ENCODE measurements at regions of chr1 and their contacts with region 1.

Region 1: DNA sequence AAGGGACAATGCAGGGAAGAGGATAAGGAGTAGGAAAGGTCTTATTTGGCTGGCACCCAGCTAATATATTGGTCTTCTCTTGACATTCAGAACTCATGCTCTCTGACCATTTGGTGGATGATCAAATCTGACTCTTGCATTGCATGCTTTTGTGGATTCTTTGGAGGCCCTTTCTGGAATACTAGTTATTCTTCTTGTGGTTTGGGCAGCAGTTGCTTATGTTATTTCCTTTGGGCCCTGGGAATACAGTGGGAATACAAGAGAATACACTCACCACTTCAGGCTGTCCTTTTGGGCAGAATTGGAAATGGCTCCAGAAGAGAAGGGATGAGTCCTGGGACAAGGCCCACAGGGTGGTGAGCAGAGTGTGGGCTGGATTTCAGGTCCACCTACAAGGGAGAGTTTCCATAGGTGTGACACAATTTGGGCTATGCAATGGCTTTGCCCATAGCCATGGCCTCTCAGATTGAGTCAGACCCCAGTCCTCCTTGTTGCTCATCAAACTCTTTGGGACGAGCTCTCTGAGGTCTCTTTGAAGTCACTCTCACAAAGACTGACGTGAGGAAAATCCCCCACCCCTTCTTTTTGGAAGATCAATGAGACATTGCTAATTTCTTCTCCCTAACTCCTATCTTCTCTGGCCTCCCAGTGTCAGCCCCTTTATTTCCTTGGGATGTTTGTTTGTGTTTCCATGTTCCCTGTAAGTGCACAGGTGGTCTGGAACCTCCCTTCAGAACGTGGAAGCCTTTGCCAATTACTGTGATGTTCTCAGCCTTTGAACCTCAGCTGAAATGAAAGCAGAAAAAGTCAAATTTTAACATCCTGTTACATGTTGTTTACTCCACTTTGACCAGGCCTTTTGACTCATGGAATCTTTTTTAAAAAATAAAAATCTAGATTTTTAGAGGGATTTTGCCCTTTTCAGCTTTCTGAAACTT is 19.4 kb downstream of the HSD11B1 start:
- DNase-seq: peak; percentile 37
- H3K4me3 Mint-ChIP-seq: peak overlapping the region; percentile 53
- H3K27ac Mint-ChIP-seq: peak overlapping the region; percentile 100
- H3K4me1 Mint-ChIP-seq: peaks cover 68% of the 10 kb centered on the region
- H3K27me3 Mint-ChIP-seq: no peaks in the 10 kb centered on the region

Region 2: DNA sequence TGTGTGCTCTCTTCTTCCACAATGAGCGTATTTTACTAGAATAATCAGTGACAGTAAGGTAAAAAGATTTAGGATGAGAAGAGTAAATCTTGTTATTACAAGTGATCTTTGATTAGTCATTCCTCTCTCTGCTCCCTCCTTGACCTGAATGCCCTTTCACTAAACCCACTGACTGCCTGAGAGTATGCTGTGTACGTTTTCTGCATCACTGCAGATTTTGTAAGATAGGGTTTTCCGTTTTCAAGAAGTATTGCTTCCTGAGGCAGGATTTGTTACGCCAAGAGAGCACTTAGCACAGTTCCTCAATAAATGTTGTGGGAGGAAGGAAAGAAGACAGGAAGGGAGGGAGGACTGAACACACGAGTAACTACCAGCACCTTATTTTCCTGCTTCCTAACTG is 64.1 kb before region 1 on chr1:
- intact Hi-C with region 1: loop called (anchors 1 kb)
- DNase-seq: no peak
- H3K4me3 Mint-ChIP-seq: peak overlapping the region; percentile 16
- H3K27ac Mint-ChIP-seq: peak overlapping the region; percentile 88
- H3K4me1 Mint-ChIP-seq: peaks cover 53% of the 10 kb centered on the region
- H3K27me3 Mint-ChIP-seq: no peaks in the 10 kb centered on the region

Region 3: DNA sequence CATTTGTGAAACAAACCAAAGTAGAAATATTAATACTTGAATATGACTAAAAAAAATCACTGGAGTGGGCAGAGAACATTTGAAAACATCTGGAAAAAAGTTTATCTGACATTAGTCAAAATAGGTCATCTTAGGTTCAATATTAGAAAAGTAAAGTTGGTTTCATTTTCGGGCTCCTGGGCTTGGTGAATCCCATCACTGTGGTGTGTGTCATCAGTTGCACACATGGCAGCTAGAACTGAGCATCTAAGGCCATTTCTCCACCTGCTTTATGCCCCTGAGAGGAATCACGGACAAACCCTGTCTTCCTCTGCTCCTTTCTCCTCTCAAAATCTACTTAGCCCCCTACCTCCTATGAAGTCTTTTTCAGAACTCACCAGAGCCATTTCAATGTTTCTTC is 13.9 kb before region 1 on chr1:
- intact Hi-C with region 1: loop called (anchors 1 kb)
- DNase-seq: no peak
- H3K4me3 Mint-ChIP-seq: peak overlapping the region; percentile 31
- H3K27ac Mint-ChIP-seq: peak overlapping the region; percentile 85
- H3K4me1 Mint-ChIP-seq: peaks cover 72% of the 10 kb centered on the region
- H3K27me3 Mint-ChIP-seq: no peaks in the 10 kb centered on the region

Region 4: GRCh38 chr1:209736490-209737117 is 12.6 kb after region 1 on chr1:
- intact Hi-C with region 1: loop called (anchors 1 kb)
- DNase-seq: no peak
- H3K4me3 Mint-ChIP-seq: no peak overlapping the region
- H3K27ac Mint-ChIP-seq: peak overlapping the region; percentile 89
- H3K4me1 Mint-ChIP-seq: peaks cover 51% of the 10 kb centered on the region
- H3K27me3 Mint-ChIP-seq: no peaks in the 10 kb centered on the region

Region 5: DNA sequence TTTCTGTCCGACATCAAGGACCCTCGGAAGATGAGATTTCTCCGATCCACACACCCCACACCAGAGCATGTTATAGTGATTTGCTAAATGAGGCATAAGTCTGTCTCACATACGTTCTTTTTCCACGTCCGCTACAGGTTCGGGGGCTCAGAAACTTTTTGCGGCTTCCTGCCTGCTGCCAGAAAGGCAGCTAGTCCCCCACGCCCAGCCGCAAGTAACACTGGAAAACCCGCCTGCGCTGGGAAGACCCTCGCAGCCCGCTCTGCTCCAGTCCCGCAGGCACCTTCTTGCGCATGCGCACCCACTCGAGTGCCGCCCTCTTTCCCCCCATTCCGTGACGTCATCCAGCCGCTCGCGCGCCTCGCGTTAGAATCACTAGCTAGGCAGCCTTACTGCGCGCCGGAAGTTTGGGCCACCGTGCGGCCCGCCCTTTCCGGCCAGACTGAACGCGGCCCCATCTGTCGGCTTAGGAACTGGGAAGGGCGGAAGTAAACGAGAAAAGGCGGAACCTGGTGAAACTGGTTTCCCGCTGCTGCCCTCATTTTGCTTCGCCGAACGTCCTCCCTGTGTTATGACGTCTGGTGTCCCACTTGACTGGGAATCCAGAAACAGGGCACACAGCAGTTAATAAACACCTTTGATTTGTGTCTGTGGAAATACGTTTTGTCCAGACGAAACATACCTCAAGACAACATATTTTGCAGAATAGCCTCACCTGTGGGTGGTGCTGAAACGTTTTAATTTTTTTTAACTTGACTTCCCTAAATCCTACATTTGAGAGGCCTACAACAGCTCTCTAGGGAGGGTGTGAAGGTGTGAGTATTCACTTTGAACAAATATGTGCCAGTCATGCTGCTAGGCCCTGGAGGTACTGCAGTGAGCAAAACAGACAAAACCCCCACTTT is 60.5 kb after region 1 on chr1 and contains the start of gene C1orf74:
- intact Hi-C with region 1: loop called (anchors 2 kb)
- DNase-seq: peak; percentile 100
- H3K4me3 Mint-ChIP-seq: peak within 1 kb of the TSS; percentile 90
- H3K27ac Mint-ChIP-seq: peak within 1 kb of the TSS; percentile 96
- H3K4me1 Mint-ChIP-seq: peaks cover 71% of the 10 kb centered on the region
- H3K27me3 Mint-ChIP-seq: no peaks in the 10 kb centered on the region
- total RNA-seq, gene C1orf74: 2.9 and 3.2 TPM in 2 replicates

Region 6: GRCh38 chr1:210061992-210062391 is 338.0 kb after region 1 on chr1:
- intact Hi-C with region 1: no loop called
- DNase-seq: no peak
- H3K4me3 Mint-ChIP-seq: no peak overlapping the region
- H3K27ac Mint-ChIP-seq: no peak overlapping the region
- H3K4me1 Mint-ChIP-seq: no peaks in the 10 kb centered on the region
- H3K27me3 Mint-ChIP-seq: no peaks in the 10 kb centered on the region